ENCODE measurements at regions of chr15 and their contacts with region 1.

Region 1: GRCh38 chr15:62847900-62848489 is 194.6 kb upstream of the TPM1 start:
- DNase-seq: peak; percentile 79 to 82 (median 79)
- ATAC-seq: peak; percentile 76 to 82 (median 78)
- H3K4me3 ChIP-seq: no peak overlapping the region
- H3K27ac ChIP-seq: no peak overlapping the region
- H3K4me1 ChIP-seq: peaks cover 0 to 24% (median 10%) of the 10 kb centered on the region in 4 donors
- H3K27me3 ChIP-seq: no peaks in the 10 kb centered on the region
- CTCF ChIP-seq: peak; percentile 78 to 85 (median 80)
- POLR2A ChIP-seq: no peak

Region 2: DNA sequence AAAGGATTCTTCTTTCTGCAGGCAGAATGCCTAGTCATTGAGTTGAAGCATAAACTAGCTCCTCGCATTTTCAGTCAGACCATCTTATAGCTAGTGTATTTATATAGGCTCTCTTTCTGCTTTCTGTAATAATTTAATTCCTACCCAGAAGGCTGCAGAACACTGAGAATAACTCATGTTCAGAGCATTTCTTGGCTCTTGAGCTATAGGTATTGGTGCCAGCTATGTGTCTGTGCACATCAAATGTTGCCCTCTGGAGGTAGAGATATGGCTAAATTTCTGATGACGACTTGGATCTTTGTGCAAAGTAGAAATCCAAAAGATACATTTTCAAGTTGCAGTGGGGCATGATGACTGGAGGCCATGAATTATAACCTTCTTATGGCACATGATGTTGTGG is 141.7 kb before region 1 on chr15:
- intact Hi-C with region 1: loop called in 1 of 2 experiments (anchors 5 kb)
- DNase-seq: no peak
- ATAC-seq: no peak
- H3K4me3 ChIP-seq: no peak overlapping the region
- H3K27ac ChIP-seq: no peak overlapping the region
- H3K4me1 ChIP-seq: no peaks in the 10 kb centered on the region
- H3K27me3 ChIP-seq: no peaks in the 10 kb centered on the region
- CTCF ChIP-seq: no peak
- POLR2A ChIP-seq: no peak

Region 3: GRCh38 chr15:62770752-62771151 is 77.2 kb before region 1 on chr15:
- intact Hi-C with region 1: no loop called
- DNase-seq: no peak
- ATAC-seq: no peak
- H3K4me3 ChIP-seq: no peak overlapping the region
- H3K27ac ChIP-seq: no peak overlapping the region
- H3K4me1 ChIP-seq: no peaks in the 10 kb centered on the region
- H3K27me3 ChIP-seq: no peaks in the 10 kb centered on the region
- CTCF ChIP-seq: no peak
- POLR2A ChIP-seq: no peak

Region 4: GRCh38 chr15:62782039-62782791 is 65.8 kb before region 1 on chr15:
- intact Hi-C with region 1: loop called in 1 of 2 experiments (anchors 10 kb)
- DNase-seq: peak in 2 of 3 donors; percentile 53 to 80
- ATAC-seq: peak; percentile 97 to 99 (median 98)
- H3K4me3 ChIP-seq: no peak overlapping the region
- H3K27ac ChIP-seq: no peak overlapping the region
- H3K4me1 ChIP-seq: peaks cover 0 to 5% (median 2%) of the 10 kb centered on the region in 4 donors
- H3K27me3 ChIP-seq: no peaks in the 10 kb centered on the region
- CTCF ChIP-seq: peak; percentile 69 to 92 (median 80)
- POLR2A ChIP-seq: no peak

Region 5: DNA sequence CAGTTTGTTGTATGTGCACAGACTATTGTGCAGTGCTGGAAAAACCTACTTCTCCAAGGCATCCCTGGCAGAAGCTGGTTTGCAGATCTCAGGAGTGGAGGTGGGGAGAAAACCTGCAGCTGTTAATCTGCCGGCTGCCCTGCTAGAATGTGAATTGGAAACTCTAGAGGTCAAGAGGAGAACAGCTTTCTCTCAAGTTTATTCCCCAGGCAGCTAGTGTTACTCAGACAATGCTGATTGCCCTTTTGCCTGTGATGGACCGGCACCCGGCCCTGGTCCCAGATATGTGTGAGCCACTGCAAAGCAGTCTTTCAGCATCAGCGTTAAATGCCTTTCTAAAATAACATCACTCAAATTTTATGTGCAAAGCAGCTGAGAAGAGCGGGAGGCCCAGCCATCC is 64.8 kb after region 1 on chr15:
- intact Hi-C with region 1: no loop called
- DNase-seq: no peak
- ATAC-seq: no peak
- H3K4me3 ChIP-seq: no peak overlapping the region
- H3K27ac ChIP-seq: no peak overlapping the region
- H3K4me1 ChIP-seq: no peaks in the 10 kb centered on the region
- H3K27me3 ChIP-seq: no peaks in the 10 kb centered on the region
- CTCF ChIP-seq: no peak
- POLR2A ChIP-seq: no peak

Region 6: GRCh38 chr15:63019539-63020109 is 171.6 kb after region 1 on chr15:
- intact Hi-C with region 1: no loop called
- DNase-seq: peak in 1 of 3 donors; percentile 52
- ATAC-seq: peak in 3 of 4 donors; percentile 36 to 70 (median 56)
- H3K4me3 ChIP-seq: no peak overlapping the region
- H3K27ac ChIP-seq: no peak overlapping the region
- H3K4me1 ChIP-seq: peaks cover 0 to 20% (median 6%) of the 10 kb centered on the region in 4 donors
- H3K27me3 ChIP-seq: no peaks in the 10 kb centered on the region
- CTCF ChIP-seq: no peak
- POLR2A ChIP-seq: no peak

Region 7: GRCh38 chr15:63030101-63030551 is 182.1 kb after region 1 on chr15:
- intact Hi-C with region 1: loop called in 1 of 2 experiments (anchors 10 kb)
- DNase-seq: no peak
- ATAC-seq: peak; percentile 40 to 70 (median 63)
- H3K4me3 ChIP-seq: no peak overlapping the region
- H3K27ac ChIP-seq: no peak overlapping the region
- H3K4me1 ChIP-seq: no peaks in the 10 kb centered on the region
- H3K27me3 ChIP-seq: no peaks in the 10 kb centered on the region
- CTCF ChIP-seq: no peak
- POLR2A ChIP-seq: no peak

Region 8: DNA sequence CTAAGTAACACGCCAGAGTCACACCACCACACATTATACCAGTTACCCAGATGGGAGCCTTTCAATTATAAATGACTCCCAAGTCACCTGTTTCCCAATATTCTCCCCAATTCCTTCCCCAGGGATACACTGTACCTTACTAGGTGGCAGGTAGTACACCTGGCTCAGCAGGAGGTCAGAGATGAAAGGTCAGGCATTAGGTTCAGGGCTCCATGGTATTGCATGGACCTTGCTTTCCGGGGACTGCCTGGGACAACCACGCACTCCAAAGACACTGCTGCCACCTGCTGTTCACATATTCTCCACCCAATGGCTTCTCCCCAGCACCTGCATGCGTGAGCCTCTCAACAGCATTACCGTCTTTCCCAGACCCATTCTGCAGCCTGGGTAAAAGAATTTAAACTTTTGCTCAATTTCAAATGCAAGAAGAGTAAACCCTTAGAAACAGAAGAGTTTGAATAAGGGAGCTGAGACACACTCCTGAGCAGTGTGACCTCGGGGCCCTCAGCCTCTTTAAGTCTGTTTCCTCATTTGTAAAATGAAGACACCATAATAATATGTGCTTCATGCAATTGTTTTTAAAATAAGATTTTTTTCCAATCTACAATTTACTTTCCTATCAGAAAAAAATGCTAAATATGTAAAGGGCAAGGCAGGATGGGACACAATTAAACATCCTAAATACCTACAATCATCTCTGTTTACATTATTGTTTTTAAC is 245.7 kb after region 1 on chr15:
- intact Hi-C with region 1: loop called in 1 of 2 experiments (anchors 10 kb)
- DNase-seq: peak; percentile 76 to 88 (median 85)
- ATAC-seq: peak; percentile 99 to 100 (median 100)
- H3K4me3 ChIP-seq: no peak overlapping the region
- H3K27ac ChIP-seq: no peak overlapping the region
- H3K4me1 ChIP-seq: no peaks in the 10 kb centered on the region
- H3K27me3 ChIP-seq: no peaks in the 10 kb centered on the region
- CTCF ChIP-seq: peak; percentile 87 to 92 (median 89)
- POLR2A ChIP-seq: no peak